WTC11 (cell line): ENCODE measurements at regions of chr1 and their contacts with region 1.

Region 1: DNA sequence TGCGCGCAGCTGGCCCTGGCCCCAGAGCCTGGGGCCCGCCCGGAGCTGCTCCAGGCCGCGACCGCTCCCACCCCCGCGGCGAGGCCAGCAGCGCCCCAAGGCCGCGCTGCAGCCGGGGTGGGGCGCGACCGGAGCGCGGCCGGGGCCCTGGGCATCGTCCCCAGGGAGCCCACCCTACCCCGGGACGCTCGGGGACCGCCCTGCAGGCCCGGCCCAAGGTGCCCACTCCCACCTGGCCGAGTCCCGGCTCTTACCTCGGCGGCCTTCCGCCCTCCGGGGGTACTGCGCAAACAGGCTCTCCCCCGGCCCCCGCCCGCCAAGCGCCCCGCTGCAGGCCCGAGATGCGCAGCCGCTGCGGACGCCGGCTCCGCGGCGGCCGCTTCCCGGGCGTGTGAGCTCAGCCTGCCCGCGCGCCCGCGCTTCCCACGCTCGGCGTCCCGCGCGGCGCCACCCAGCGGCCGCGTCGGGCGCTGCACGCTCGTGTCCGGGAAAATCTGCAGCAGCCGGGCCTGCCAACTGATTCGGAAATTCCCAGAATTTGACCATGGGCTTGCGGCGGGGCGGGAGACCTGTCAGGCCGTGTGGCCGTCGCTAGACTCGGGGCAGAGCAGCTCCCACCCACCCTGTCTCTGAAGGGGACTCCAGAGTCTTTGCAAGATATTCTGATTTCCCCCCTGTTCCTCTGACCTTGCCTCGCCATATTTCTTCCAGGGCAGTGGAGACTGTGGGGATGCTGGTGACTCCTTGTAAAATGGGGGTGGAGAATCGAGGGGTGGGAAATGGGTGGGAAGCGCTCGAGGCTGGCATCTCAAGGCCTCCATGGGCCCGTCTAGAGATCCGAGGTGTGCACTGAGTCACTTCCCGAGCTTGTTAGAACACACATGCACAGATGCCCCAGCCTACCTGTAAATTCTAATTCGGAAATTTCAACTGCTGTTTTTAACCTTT is 41.9 kb downstream of the CD34 start:
- DNase-seq: peak; percentile 72
- ATAC-seq: peak; percentile 65
- H3K4me3 Mint-ChIP-seq: peak overlapping the region; percentile 71
- H3K27ac Mint-ChIP-seq: no peak overlapping the region
- H3K4me1 Mint-ChIP-seq: peaks cover 18% of the 10 kb centered on the region
- H3K27me3 Mint-ChIP-seq: peaks cover 28% of the 10 kb centered on the region
- CTCF ChIP-seq: peak; percentile 60

Region 2: DNA sequence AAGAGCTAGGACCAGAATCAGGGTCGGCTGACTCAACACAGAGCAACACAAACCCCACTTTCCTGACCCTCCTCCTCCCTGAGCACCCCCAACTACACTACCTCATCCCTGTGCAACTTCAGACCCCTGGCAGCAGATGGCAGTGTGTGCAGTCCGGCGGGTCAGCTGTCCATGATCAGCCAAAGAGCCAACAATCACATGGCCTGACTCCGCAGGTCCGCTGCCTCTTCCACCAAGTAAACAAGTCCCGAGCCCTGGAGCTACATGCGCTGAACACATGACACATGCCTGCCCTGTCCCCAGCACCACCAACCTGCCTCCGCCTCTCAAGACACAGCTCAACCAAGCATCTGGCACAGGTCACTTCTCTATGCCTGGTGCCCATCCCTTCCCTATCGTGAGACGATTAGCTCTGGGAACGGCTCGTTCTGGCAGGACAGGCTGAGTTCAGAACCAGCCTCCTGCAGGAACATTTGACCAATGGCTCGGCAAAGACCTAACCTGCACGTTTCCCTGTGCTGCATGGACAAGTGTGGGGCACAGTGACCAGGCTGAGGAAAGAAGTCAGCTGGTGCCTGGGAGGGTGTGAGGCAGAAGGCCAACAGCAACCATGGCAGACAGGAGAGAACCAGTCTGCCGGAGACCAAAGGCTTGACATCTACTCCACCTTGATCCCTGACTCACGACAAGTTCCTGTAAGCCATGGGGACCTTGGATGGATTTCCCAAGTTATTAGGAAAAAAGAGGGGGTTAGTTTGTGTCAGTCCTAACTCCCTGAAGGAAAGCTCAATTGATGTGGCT is 56.9 kb before region 1 on chr1:
- CTCF ChIA-PET with region 1: interaction called, 12 read pairs
- POLR2A ChIA-PET with region 1: no interaction called
- DNase-seq: peak; percentile 55
- ATAC-seq: peak; percentile 88
- H3K4me3 Mint-ChIP-seq: no peak overlapping the region
- H3K27ac Mint-ChIP-seq: no peak overlapping the region
- H3K4me1 Mint-ChIP-seq: peaks cover 10% of the 10 kb centered on the region
- H3K27me3 Mint-ChIP-seq: no peaks in the 10 kb centered on the region
- CTCF ChIP-seq: no peak

Region 3: DNA sequence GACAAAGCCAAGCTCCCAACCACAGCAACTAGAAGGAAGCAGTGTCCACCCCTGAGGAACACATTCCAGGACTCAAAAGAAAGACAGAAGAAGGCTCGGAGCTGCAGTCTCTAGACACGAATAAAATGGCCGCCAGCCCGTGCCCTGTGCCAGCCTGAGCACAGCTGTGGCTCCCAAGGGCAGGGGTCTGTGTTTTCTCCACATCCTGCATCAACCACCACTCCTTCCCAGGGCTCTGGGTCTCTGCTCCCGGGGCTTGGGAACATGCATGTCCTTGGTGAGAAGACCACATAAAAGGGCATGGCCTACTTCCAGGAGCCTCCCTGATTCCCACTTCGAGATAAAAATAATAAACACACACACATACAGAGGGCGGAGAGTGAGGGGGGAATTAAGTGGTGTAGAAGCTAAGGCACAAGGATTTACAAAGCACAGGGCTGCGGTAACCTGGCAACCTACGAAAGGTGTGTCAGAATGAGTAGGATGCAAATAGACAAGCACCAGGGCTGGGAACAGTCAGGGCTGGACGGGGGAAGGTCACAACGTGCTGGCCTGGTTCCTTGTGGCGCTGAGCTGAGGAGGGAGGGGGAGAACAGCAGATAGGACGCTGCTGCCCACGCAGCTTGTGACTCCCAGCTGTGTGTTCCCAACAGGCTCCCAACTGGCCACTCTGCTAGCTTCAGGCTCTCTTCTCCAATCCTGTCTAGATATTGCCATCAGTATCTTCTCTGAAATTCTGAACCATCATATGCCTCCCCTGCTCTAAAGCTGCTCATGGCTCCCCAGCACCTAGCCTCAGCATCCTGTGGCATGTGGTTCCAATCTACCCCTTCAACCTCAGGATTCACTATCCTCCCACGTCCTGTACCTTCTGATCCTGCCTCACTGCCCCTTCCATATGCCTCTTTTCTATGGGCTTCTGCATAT is 30.6 kb before region 1 on chr1:
- CTCF ChIA-PET with region 1: interaction called, 66 read pairs
- POLR2A ChIA-PET with region 1: no interaction called
- DNase-seq: no peak
- ATAC-seq: no peak
- H3K4me3 Mint-ChIP-seq: no peak overlapping the region
- H3K27ac Mint-ChIP-seq: no peak overlapping the region
- H3K4me1 Mint-ChIP-seq: no peaks in the 10 kb centered on the region
- H3K27me3 Mint-ChIP-seq: no peaks in the 10 kb centered on the region
- CTCF ChIP-seq: no peak

Region 4: GRCh38 chr1:208149776-208150514 is 280.9 kb after region 1 on chr1:
- CTCF ChIA-PET with region 1: no interaction called
- POLR2A ChIA-PET with region 1: no interaction called
- DNase-seq: no peak
- ATAC-seq: peak; percentile 62
- H3K4me3 Mint-ChIP-seq: no peak overlapping the region
- H3K27ac Mint-ChIP-seq: no peak overlapping the region
- H3K4me1 Mint-ChIP-seq: peaks cover 12% of the 10 kb centered on the region
- H3K27me3 Mint-ChIP-seq: no peaks in the 10 kb centered on the region
- CTCF ChIP-seq: no peak